Caco-2 (cell line): ENCODE measurements at regions of chr3 and their contacts with region 1.

Region 1: GRCh38 chr3:94249585-94249984 is 186.7 kb downstream of the NSUN3 start:
- DNase-seq: peak; percentile 48 to 73
- H3K4me3 ChIP-seq: no peak overlapping the region
- H3K4me3 Mint-ChIP-seq: no peak overlapping the region
- H3K27ac Mint-ChIP-seq: no peak overlapping the region
- H3K4me1 ChIP-seq: peaks cover 29% of the 10 kb centered on the region
- H3K4me1 Mint-ChIP-seq: peaks cover 25% of the 10 kb centered on the region
- H3K27me3 ChIP-seq: no peaks in the 10 kb centered on the region
- H3K27me3 Mint-ChIP-seq: peaks cover 2% of the 10 kb centered on the region
- CTCF ChIP-seq: peak; percentile 70 to 74

Region 2: GRCh38 chr3:94101851-94102250 is 147.7 kb before region 1 on chr3:
- CTCF ChIA-PET with region 1: interaction called, 10 read pairs
- POLR2A ChIA-PET with region 1: no interaction called
- intact Hi-C with region 1: no loop called
- DNase-seq: no peak
- H3K4me3 ChIP-seq: no peak overlapping the region
- H3K4me3 Mint-ChIP-seq: no peak overlapping the region
- H3K27ac Mint-ChIP-seq: no peak overlapping the region
- H3K4me1 ChIP-seq: no peaks in the 10 kb centered on the region
- H3K4me1 Mint-ChIP-seq: no peaks in the 10 kb centered on the region
- H3K27me3 ChIP-seq: no peaks in the 10 kb centered on the region
- H3K27me3 Mint-ChIP-seq: no peaks in the 10 kb centered on the region
- CTCF ChIP-seq: no peak

Region 3: DNA sequence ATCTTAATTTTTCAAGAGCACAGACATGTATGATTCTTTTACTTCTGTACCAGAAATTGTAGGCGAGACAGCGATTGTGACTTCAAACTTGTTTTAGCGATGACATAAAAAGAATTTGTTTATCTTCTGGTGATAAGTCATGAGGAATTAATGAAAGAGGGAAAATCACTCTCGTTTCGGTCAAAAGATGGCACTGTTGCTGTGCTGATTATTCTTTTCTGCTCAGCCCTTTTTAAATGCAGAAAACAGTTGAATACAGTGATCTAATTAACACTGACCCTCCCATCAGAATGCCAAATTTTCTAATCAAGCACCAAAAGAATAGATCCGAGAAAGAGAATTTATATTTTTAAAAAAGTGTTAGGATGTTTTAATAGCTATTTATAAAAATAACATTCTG is 134.1 kb before region 1 on chr3:
- CTCF ChIA-PET with region 1: no interaction called
- POLR2A ChIA-PET with region 1: no interaction called
- intact Hi-C with region 1: loop called (anchors 1 kb)
- DNase-seq: peak in 1 of 2 experiments; percentile 21
- H3K4me3 ChIP-seq: no peak overlapping the region
- H3K4me3 Mint-ChIP-seq: no peak overlapping the region
- H3K27ac Mint-ChIP-seq: no peak overlapping the region
- H3K4me1 ChIP-seq: no peaks in the 10 kb centered on the region
- H3K4me1 Mint-ChIP-seq: no peaks in the 10 kb centered on the region
- H3K27me3 ChIP-seq: no peaks in the 10 kb centered on the region
- H3K27me3 Mint-ChIP-seq: no peaks in the 10 kb centered on the region
- CTCF ChIP-seq: peak in 1 of 2 experiments; percentile 45

Region 4: DNA sequence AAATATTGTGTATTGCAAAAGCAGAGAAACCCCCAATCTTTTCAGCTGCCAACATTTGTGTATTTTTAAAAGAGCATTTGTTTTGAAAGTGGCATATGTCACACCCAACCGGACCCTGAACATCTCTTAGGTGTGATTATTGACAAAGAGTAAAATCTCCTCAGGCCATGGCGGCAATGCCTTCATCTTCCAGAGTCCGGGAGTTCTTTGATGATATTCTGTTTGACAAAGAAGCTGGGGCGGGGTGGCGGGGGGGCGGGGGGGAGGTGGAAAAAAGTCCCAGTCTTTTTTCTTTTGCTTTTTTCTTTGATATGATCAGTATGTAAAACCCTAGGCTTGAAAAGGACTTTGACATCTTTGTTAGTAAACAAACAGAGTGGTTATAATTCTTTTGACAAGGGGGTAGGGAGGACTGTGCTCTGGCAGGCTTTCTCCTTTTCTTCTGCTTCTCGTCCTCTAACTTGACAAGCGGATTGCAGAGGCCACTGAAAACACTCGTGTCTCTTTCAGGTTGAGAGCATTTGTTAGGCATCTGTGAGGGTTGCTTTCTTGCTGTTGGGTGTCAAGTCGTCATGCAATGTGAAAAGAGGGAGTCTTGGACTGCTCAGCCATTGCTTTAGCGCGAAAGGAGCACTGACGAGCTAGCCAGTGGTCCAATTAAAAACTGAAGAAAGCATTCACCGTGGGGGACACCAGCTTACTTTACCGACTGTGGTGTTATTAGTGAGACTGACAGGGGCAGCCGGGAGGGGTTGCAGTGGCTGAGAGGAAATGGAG is 56.4 kb after region 1 on chr3:
- CTCF ChIA-PET with region 1: no interaction called
- POLR2A ChIA-PET with region 1: no interaction called
- intact Hi-C with region 1: loop called (anchors 2 kb)
- DNase-seq: peak; percentile 54 to 68
- H3K4me3 ChIP-seq: no peak overlapping the region
- H3K4me3 Mint-ChIP-seq: peak overlapping the region; percentile 46
- H3K27ac Mint-ChIP-seq: peak overlapping the region; percentile 28
- H3K4me1 ChIP-seq: peaks cover 29% of the 10 kb centered on the region
- H3K4me1 Mint-ChIP-seq: peaks cover 6% of the 10 kb centered on the region
- H3K27me3 ChIP-seq: no peaks in the 10 kb centered on the region
- H3K27me3 Mint-ChIP-seq: no peaks in the 10 kb centered on the region
- CTCF ChIP-seq: no peak

Region 5: DNA sequence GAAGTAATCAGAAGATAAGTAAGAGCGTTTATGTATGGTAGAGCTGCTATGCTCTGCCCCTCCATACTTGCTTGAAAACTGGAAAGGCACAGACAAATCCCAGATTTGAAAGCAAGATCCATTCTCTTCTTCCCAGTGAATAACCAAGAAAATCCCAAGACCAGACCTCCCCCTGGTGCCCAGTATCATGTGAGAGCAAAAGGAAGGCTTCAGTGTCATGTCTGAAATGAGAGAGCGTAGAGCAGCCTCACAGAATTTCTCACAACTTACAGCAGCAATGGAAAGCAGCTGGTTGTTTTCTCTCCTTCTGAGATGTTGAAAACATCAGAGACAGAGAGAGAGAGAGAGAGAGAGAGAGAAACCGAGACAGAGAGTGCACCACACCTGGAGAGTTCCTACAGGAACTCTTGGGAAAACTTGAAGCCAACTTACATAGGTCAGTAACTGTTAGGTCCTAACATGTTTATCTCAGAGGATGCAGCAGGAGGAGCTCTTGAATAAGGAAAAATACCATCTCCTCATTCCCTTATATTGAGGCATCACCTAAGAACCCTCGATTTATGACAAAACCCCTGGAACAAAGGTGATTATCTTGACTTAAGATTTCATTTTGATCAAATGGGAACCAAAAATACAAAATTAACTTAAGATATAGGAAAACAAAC is 86.6 kb after region 1 on chr3:
- CTCF ChIA-PET with region 1: interaction called, 10 read pairs
- POLR2A ChIA-PET with region 1: no interaction called
- intact Hi-C with region 1: loop called (anchors 1 kb)
- DNase-seq: peak in 1 of 2 experiments; percentile 52
- H3K4me3 ChIP-seq: no peak overlapping the region
- H3K4me3 Mint-ChIP-seq: peak overlapping the region; percentile 2
- H3K27ac Mint-ChIP-seq: peak overlapping the region; percentile 15
- H3K4me1 ChIP-seq: peaks cover 7% of the 10 kb centered on the region; the same call in 1 of the 2 replicates
- H3K4me1 Mint-ChIP-seq: peaks cover 28% of the 10 kb centered on the region
- H3K27me3 ChIP-seq: no peaks in the 10 kb centered on the region
- H3K27me3 Mint-ChIP-seq: no peaks in the 10 kb centered on the region
- CTCF ChIP-seq: peak; percentile 41 to 62

Region 6: DNA sequence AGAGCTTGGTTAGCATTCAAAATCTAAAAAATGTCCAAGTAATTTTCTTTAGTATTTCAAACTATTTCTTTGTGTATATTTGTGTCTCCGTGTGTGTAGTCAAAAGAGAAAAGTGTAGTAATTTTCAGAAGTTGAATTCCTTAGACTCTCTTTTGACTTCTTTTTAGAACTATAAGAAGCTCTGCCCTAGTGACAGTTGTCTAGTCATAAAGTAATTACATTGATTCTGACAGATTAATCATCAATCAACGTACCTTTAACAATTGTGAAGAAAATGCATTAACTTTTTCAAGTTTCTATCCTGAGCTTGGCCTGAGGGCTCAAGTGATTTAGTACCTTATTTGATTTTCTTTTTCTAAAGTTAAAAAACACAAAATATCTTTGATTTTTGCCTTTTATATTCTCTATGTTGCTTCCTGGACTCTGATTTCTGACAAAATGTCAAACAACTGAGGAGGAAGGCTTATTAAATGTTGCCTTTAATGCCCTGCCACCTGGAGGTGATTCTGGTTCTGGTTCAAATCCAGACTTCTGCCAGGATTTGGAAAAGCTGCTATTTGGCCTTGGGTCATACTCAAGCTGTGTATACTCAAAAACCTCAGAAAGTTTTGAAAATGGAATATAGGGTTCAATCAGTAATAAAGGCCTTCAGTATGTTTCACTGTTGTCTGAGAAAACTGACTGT is 466.9 kb after region 1 on chr3:
- CTCF ChIA-PET with region 1: no interaction called
- POLR2A ChIA-PET with region 1: no interaction called
- intact Hi-C with region 1: loop called (anchors 2 kb)
- DNase-seq: peak in 1 of 2 experiments; percentile 29
- H3K4me3 ChIP-seq: no peak overlapping the region
- H3K4me3 Mint-ChIP-seq: no peak overlapping the region
- H3K27ac Mint-ChIP-seq: no peak overlapping the region
- H3K4me1 ChIP-seq: no peaks in the 10 kb centered on the region
- H3K4me1 Mint-ChIP-seq: no peaks in the 10 kb centered on the region
- H3K27me3 ChIP-seq: no peaks in the 10 kb centered on the region
- H3K27me3 Mint-ChIP-seq: no peaks in the 10 kb centered on the region
- CTCF ChIP-seq: peak; percentile 14 to 43